Activated naive CD4-positive, alpha-beta T cell treated with anti-CD3 and anti-CD28 coated beads for 36 hours (primary cell): ENCODE measurements at regions of chr3 and their contacts with region 1.

Region 1: DNA sequence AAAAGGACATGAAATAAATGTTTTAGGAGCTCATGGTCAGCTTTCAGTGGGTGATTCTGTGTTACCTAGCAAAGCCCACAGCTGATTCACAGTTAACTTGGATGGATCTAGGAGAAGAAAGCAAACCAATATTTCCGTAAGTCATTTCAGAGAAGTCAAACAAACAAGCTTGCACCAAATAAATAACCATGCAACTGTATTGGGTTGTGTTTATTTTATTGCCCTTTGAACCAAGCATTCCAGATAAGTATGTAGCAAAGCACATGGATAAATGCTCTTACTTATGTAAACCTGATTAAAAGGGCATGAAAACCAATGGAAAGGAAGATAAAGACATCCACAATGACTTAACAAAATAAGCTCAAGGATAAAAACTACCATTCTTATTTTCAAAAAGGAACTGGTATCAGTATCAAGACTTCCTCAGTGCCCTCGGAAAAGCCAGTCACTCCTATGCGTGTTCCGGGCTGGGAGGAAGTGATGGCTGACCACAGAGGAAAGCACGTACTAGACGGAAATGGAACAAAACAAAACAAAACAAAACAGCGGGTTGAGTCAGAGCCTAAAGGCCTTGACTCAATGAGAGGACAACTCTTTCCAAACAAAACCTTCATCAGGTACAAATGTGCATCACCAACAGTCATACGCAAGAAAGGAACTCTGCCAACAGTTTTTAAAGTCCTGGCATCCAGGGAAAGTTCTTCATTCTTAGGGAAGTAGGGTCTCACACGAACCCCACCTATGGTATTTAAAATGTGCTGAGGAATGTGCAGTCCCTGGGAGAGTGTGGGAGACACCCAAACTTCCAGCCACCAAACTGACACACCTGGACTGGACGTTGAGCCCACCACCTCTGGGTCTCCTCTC is 103.3 kb downstream of the SNRK start:
- DNase-seq: peak; percentile 87
- H3K4me3 Mint-ChIP-seq: peak overlapping the region; percentile 9
- H3K27ac Mint-ChIP-seq: peak overlapping the region; percentile 55
- H3K4me1 Mint-ChIP-seq: peaks cover 63% of the 10 kb centered on the region
- H3K27me3 Mint-ChIP-seq: no peaks in the 10 kb centered on the region

Region 2: DNA sequence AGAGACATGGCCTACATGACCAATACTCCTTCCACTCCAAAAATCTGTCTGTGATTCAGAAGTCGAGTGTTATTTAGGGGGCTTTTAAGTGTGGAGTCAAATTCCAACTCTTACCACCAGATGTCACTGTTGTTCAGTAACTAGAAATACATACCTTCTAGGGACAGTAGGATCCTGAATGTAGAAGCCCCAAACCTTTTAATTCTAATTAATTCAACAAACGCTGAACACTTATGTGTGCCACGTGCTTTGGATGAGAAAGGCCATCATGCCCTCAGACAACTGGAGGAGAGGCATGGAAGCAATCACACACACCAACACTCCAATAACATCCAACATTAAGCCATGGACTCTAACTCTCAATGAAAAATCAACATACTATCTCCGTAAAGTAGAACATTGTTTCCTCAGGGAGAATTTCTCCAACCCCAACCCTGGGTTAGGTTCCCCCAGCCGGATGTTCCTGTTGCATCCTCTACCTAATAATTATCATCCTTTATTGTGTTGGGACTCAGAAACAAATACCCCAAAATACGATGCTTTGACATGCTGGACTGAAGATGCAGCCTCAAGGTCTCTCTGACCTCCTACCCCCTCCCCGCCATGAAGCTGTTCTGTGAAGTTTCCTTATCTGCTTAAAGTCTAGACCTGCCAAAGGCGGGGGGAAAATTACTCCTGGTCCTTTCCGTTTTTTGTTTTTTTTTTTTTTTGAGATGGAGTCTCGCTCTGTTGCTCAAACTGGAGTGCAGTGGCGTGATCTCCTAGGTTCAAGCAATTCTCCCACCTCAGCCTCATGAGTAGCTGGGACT is 608.5 kb before region 1 on chr3:
- CTCF ChIA-PET with region 1: no interaction called
- intact Hi-C with region 1: no loop called
- DNase-seq: peak; percentile 22
- H3K4me3 Mint-ChIP-seq: no peak overlapping the region
- H3K27ac Mint-ChIP-seq: no peak overlapping the region
- H3K4me1 Mint-ChIP-seq: no peaks in the 10 kb centered on the region
- H3K27me3 Mint-ChIP-seq: no peaks in the 10 kb centered on the region

Region 3: GRCh38 chr3:43489930-43490329 is 100.3 kb after region 1 on chr3:
- CTCF ChIA-PET with region 1: no interaction called
- intact Hi-C with region 1: no loop called
- DNase-seq: no peak
- H3K4me3 Mint-ChIP-seq: no peak overlapping the region
- H3K27ac Mint-ChIP-seq: no peak overlapping the region
- H3K4me1 Mint-ChIP-seq: peaks cover 24% of the 10 kb centered on the region
- H3K27me3 Mint-ChIP-seq: no peaks in the 10 kb centered on the region

Region 4: GRCh38 chr3:43627360-43627759 is 237.7 kb after region 1 on chr3:
- CTCF ChIA-PET with region 1: no interaction called
- intact Hi-C with region 1: loop called (anchors 1 kb)
- DNase-seq: peak; percentile 28
- H3K4me3 Mint-ChIP-seq: no peak overlapping the region
- H3K27ac Mint-ChIP-seq: no peak overlapping the region
- H3K4me1 Mint-ChIP-seq: peaks cover 30% of the 10 kb centered on the region
- H3K27me3 Mint-ChIP-seq: peaks cover 5% of the 10 kb centered on the region

Region 5: DNA sequence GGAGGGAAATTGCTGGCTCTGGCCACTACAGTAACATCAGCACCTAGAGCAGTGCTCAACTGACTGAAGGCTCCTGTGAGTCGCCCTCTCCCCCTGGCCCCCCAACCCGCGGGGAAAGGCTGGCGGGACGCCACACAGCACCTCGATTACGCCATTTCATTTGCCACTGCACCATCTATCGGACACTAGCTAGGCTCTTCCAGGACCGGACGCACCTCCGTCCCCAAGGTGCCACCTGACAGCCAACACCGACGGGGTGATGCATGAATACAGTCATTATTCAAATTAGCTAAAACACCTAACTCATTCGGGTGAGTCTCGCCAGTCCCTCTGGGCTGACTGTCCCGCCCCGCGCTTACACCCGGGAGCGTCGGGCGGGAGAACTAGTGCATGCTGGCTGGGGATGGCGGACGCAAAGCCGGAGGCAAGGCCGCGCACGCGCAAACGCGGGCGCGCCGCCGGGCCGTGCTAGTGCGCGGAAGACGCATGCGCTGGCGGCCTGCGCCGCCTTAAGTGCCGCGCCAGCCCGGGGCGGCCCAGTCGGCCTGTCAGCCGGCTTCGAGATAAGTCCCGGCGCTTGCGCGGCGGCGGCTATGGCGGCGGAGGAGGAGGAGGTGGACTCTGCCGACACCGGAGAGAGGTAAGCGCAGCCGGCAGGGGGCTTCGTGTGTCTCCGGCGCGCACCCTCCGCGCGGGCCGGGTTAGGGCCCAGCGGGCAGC is 300.9 kb after region 1 on chr3 and contains the start of gene ABHD5:
- CTCF ChIA-PET with region 1: no interaction called
- intact Hi-C with region 1: loop called (anchors 2 kb)
- DNase-seq: peak; percentile 85
- H3K4me3 Mint-ChIP-seq: peak within 1 kb of the TSS; percentile 83
- H3K27ac Mint-ChIP-seq: peak within 1 kb of the TSS; percentile 85
- H3K4me1 Mint-ChIP-seq: peaks cover 31% of the 10 kb centered on the region
- H3K27me3 Mint-ChIP-seq: no peaks in the 10 kb centered on the region
- total RNA-seq, gene ABHD5: 9.4 to 11.0 TPM